ENCODE measurements at regions of chr5 and their contacts with region 1.

Region 1: GRCh38 chr5:80191991-80192398 is 63.9 kb downstream of the SERINC5 start:
- DNase-seq: no peak
- ATAC-seq: peak; percentile 24
- H3K4me3 ChIP-seq: no peak overlapping the region
- H3K27ac ChIP-seq: no peak overlapping the region
- H3K4me1 ChIP-seq: peaks cover 18% of the 10 kb centered on the region; the same call in 1 of the 2 replicates
- H3K27me3 ChIP-seq: no peaks in the 10 kb centered on the region
- CTCF ChIP-seq: no peak
- EP300 ChIP-seq: no peak
- POLR2A ChIP-seq: no peak
- RAD21 ChIP-seq: no peak

Region 2: GRCh38 chr5:80238778-80239679 is 47.0 kb after region 1 on chr5:
- CTCF ChIA-PET with region 1: interaction called, 4 read pairs
- POLR2A ChIA-PET with region 1: interaction called, 7 read pairs
- RAD21 ChIA-PET with region 1: interaction called, 6 read pairs
- SMC1A ChIA-PET with region 1: interaction called, 10 read pairs
- in situ Hi-C with region 1: no loop called
- intact Hi-C with region 1: no loop called
- DNase-seq: no peak
- ATAC-seq: peak; percentile 21; the same call in 1 of the 3 replicates
- H3K4me3 ChIP-seq: no peak overlapping the region
- H3K27ac ChIP-seq: no peak overlapping the region
- H3K4me1 ChIP-seq: no peaks in the 10 kb centered on the region
- H3K27me3 ChIP-seq: no peaks in the 10 kb centered on the region
- CTCF ChIP-seq: no peak
- EP300 ChIP-seq: no peak
- POLR2A ChIP-seq: no peak
- RAD21 ChIP-seq: no peak

Region 3: GRCh38 chr5:80369521-80369920 is 177.5 kb after region 1 on chr5:
- CTCF ChIA-PET with region 1: no interaction called
- POLR2A ChIA-PET with region 1: no interaction called
- RAD21 ChIA-PET with region 1: no interaction called
- SMC1A ChIA-PET with region 1: no interaction called
- in situ Hi-C with region 1: no loop called
- intact Hi-C with region 1: no loop called
- DNase-seq: no peak
- ATAC-seq: no peak
- H3K4me3 ChIP-seq: no peak overlapping the region
- H3K27ac ChIP-seq: no peak overlapping the region
- H3K4me1 ChIP-seq: no peaks in the 10 kb centered on the region
- H3K27me3 ChIP-seq: no peaks in the 10 kb centered on the region
- CTCF ChIP-seq: no peak
- EP300 ChIP-seq: no peak
- POLR2A ChIP-seq: no peak
- RAD21 ChIP-seq: no peak